ENCODE measurements at regions of chr18 and their contacts with region 1.

Region 1: DNA sequence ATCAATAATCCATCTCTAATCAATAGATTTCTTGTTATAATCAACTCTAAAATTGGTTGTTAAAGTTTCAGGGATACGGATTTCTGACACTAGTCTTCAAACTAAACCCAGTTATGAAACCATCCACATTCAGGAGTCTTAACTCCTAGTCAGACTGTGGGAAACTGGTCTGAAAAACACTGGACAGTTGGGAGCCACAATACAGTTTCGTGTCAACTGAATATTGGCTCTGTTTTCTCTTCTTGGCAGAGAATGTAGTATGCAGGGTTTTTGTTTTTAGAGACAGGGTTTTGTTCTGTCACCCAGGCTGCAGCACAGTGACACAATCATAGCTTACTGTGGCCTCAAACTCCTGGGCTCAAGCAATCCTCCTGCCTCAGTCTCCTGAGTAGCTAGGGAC is 123.1 kb downstream of the RTTN start:
- DNase-seq: no peak
- H3K4me3 Mint-ChIP-seq: no peak overlapping the region
- H3K27ac Mint-ChIP-seq: no peak overlapping the region
- H3K4me1 Mint-ChIP-seq: peaks cover 8% of the 10 kb centered on the region
- H3K27me3 Mint-ChIP-seq: no peaks in the 10 kb centered on the region

Region 2: GRCh38 chr18:68847219-68847837 is 1235.1 kb before region 1 on chr18:
- intact Hi-C with region 1: loop called (anchors 5 kb)
- DNase-seq: no peak
- H3K4me3 Mint-ChIP-seq: no peak overlapping the region
- H3K27ac Mint-ChIP-seq: no peak overlapping the region
- H3K4me1 Mint-ChIP-seq: no peaks in the 10 kb centered on the region
- H3K27me3 Mint-ChIP-seq: no peaks in the 10 kb centered on the region

Region 3: GRCh38 chr18:69469444-69469919 is 612.9 kb before region 1 on chr18:
- intact Hi-C with region 1: loop called (anchors 2 kb)
- DNase-seq: peak; percentile 12
- H3K4me3 Mint-ChIP-seq: no peak overlapping the region
- H3K27ac Mint-ChIP-seq: no peak overlapping the region
- H3K4me1 Mint-ChIP-seq: no peaks in the 10 kb centered on the region
- H3K27me3 Mint-ChIP-seq: no peaks in the 10 kb centered on the region

Region 4: GRCh38 chr18:69636529-69637301 is 445.7 kb before region 1 on chr18:
- intact Hi-C with region 1: loop called (anchors 2 kb)
- DNase-seq: no peak
- H3K4me3 Mint-ChIP-seq: no peak overlapping the region
- H3K27ac Mint-ChIP-seq: no peak overlapping the region
- H3K4me1 Mint-ChIP-seq: no peaks in the 10 kb centered on the region
- H3K27me3 Mint-ChIP-seq: peaks cover 6% of the 10 kb centered on the region

Region 5: DNA sequence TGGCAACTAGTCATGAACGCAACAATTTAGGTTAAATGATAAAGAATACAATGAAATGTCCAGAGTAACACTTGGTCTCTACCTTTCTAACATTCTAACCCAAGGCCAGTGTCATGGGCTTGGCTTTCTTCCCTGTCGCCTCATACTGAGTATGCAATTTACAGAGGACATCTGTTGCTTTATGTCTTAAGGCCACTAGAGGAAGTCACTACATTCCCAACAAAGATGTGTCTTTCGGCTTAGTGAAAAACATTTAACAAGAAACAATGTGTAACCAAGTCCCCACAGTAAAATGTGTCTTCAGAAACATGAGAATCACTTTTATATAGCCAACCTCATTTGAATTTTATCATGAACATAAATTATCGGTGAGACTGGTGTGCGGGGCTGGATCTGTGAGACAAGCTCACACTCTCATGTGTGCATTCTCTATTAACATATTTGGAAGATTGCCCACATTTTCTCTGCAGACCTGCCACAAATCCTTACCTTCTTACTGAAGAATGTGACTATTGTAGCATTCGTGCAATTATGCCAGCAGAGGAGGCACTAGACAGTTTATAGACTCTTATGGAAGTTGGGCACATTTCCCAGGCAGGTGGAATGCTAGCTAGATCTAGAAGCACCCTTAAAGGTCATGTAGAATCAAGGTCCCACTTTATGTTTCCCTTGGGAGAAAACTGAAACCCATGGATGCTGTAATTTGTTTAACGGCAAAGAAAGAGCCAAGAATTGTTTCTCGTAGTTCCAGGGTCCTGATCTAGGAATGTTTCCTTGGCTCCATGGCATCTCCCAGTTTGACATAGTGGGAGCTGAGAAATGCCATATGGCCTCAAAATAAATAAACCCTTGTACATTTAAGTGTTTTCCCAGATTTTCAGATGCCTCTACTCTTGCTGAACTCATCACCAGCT is 236.6 kb before region 1 on chr18:
- intact Hi-C with region 1: loop called (anchors 10 kb)
- DNase-seq: no peak
- H3K4me3 Mint-ChIP-seq: no peak overlapping the region
- H3K27ac Mint-ChIP-seq: no peak overlapping the region
- H3K4me1 Mint-ChIP-seq: peaks cover 3% of the 10 kb centered on the region
- H3K27me3 Mint-ChIP-seq: no peaks in the 10 kb centered on the region

Region 6: GRCh38 chr18:70068981-70069380 is 13.4 kb before region 1 on chr18:
- intact Hi-C with region 1: no loop called
- DNase-seq: no peak
- H3K4me3 Mint-ChIP-seq: no peak overlapping the region
- H3K27ac Mint-ChIP-seq: no peak overlapping the region
- H3K4me1 Mint-ChIP-seq: no peaks in the 10 kb centered on the region
- H3K27me3 Mint-ChIP-seq: no peaks in the 10 kb centered on the region

Region 7: DNA sequence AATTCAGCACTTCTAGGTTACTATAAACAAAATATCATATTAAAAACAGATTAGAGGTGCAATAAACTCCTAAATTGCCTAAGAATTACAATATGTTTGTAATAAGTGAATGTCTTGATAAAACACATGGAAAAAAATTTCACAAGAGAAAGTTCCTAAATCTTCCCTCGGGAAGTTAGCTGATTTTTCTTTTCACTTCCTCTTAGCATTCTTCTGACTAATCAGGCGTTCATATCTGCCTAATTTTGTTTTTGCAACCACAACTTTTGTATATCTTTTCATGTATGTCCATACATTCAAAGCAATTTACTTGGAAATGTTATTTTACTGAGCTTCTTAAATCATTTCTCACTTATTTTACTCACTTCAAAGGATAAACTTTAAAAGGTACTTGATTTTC is 34.5 kb after region 1 on chr18:
- intact Hi-C with region 1: no loop called
- DNase-seq: no peak
- H3K4me3 Mint-ChIP-seq: no peak overlapping the region
- H3K27ac Mint-ChIP-seq: no peak overlapping the region
- H3K4me1 Mint-ChIP-seq: peaks cover 8% of the 10 kb centered on the region
- H3K27me3 Mint-ChIP-seq: no peaks in the 10 kb centered on the region

Region 8: DNA sequence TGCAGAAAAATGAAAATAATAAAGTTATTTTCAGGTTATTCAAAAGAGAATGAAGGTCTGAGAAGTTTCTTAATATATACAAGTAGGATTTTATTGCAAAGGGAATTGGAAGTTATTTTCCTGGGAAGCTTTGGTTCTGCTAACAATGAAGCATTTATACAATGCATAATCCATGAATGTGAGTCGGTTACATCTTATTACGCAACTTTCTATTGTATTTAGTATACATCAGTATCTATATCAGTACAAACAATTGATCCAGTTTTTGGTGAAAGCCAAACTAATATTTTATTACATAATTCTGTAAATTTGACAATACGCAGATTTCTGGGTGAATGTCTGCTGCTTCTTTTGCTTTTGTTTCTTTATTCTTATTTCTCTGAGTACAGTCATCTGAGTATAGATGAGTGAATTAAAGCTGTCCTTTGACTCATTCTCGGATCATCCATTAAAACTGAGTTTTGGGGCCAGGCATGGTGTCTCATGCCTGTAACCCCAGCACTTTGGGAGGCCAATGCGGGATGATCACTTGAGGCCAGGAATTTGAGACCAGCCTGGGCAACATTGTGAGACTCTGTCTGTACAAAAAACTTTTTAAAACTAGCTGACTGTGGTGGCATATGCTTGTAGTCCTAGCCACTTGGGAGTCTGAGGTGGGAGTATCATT is 315.0 kb after region 1 on chr18:
- intact Hi-C with region 1: no loop called
- DNase-seq: no peak
- H3K4me3 Mint-ChIP-seq: no peak overlapping the region
- H3K27ac Mint-ChIP-seq: no peak overlapping the region
- H3K4me1 Mint-ChIP-seq: no peaks in the 10 kb centered on the region
- H3K27me3 Mint-ChIP-seq: no peaks in the 10 kb centered on the region

Measured in activated T-helper 2 cell treated with anti-CD3 and anti-CD28 coated beads, Interferon-gamma antibody, Interleukin-2, Interleukin-4, amounts not matched to agents 10 μg/mL and 5 μg/mL and 100 μg/mL, durations not matched to agents 14 hours and 24 hours and 36 hours (primary cell).